GM10248 (cell line): ENCODE measurements at regions of chr12 and their contacts with region 1.

Region 1: GRCh38 chr12:11568762-11569478 is 80.6 kb upstream of the ETV6 start:
- DNase-seq: peak; percentile 52
- CTCF ChIP-seq: no peak

Region 2: GRCh38 chr12:11553871-11554533 is 14.9 kb before region 1 on chr12:
- CTCF ChIA-PET with region 1: interaction called, 13 read pairs
- POLR2A ChIA-PET with region 1: no interaction called
- DNase-seq: peak; percentile 70
- CTCF ChIP-seq: peak; percentile 53

Region 3: DNA sequence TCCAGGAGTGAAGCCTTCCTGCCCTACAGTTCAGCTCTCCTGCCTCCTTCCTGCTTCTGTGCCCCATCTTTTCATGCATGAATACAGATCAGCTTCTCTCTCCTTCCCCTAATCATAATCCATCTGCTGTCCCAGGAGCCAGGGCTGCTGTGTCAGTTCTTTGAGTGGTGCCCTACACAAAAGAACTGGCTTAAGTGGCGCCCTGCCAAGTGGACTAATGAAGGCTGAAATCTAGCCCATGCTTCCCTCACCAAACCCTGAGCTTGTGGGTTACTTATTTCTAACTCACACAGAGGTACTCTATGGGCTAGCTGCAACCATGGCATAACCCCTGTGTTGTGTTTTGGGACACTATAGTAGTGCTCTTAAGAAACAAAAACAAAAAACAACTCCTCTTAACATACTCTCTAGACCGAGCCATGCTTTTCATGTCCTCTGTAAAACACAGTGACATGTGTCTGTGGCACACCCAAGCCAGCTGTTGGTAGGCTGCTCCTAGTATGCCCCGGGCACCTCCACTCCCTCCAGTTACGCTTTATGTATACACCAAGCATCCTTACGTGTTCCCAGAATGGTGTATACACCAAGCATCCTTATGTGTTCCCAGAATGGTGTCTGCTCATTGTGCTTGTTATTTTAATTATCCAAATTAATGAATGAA is 61.3 kb after region 1 on chr12:
- CTCF ChIA-PET with region 1: no interaction called
- POLR2A ChIA-PET with region 1: no interaction called
- DNase-seq: no peak
- CTCF ChIP-seq: no peak

Region 4: DNA sequence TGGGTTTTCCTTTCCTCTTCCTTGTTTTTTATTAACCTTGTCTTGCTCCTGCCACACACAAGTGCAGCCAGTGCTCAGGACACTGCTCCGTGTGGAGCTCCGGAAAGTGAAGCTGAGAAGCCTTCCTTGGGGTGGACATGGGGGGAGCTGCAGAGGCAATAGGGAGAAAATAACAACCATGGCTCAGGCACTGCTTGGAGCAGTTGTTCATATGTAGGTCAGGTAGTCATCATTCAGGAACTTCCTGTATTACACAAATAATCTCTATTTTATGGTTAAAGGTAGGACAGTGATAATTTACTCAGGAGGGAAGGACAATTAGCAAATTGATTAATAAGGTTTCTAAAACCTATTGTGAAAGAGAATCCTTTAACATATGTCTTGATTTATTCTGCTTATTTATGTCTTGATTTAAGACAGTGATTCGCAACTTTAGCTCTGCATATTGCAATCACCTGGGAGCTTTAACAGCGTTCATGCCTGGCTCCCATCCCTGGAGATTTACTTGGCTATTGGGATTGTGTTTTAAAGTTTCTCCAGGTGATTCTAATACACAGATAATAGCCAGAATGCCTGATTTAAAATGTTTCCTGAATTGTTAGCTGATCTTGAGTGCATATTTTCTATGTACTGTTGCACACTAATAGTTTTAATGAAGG is 172.6 kb after region 1 on chr12:
- CTCF ChIA-PET with region 1: no interaction called
- POLR2A ChIA-PET with region 1: no interaction called
- DNase-seq: no peak
- CTCF ChIP-seq: no peak

Region 5: GRCh38 chr12:11832093-11832492 is 263.2 kb after region 1 on chr12:
- CTCF ChIA-PET with region 1: no interaction called
- POLR2A ChIA-PET with region 1: interaction called, 11 read pairs
- DNase-seq: peak; percentile 30
- CTCF ChIP-seq: no peak